ENCODE measurements at regions of chr12 and their contacts with region 1.

Region 1: GRCh38 chr12:29505122-29505521 is 7.6 kb upstream of the OVCH1 start:
- DNase-seq: no peak
- H3K4me3 ChIP-seq: no peak overlapping the region
- H3K27ac ChIP-seq: no peak overlapping the region
- H3K4me1 ChIP-seq: no peaks in the 10 kb centered on the region
- H3K27me3 ChIP-seq: no peaks in the 10 kb centered on the region
- CTCF ChIP-seq: no peak

Region 2: DNA sequence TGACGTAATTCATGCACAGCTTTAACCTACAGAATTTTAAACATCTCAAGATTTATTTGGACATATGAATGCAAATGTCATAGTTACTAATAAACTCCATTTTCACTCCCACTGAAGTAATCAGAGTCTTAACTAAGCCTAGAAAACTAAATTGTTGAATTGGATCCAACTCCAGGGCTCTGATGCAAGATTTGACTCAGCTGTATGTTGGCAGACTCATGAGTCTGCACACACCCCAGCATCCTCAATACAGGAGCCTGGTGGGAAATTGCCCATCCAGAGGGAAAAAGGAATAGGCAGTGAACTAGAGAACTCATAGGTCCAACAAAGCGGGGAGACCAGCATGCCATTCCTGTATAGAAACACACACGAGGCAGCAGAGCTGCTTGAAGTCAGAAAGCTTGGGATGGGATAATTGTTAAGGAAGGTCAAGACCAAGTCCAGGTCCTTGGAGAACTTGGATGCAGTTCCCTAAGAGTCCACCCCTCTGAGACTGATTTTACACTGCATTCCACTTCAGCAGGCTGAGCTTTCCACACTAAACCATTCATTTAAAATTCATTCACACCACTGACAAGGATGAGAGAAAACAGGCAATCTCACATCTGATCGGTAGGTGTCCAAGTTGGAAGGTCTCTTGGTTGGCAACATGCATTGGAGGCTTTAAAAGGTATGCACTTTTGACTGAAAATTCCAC is 264.2 kb after region 1 on chr12:
- intact Hi-C with region 1: no loop called
- DNase-seq: peak in 1 of 2 donors; percentile 70
- H3K4me3 ChIP-seq: no peak overlapping the region
- H3K27ac ChIP-seq: no peak overlapping the region
- H3K4me1 ChIP-seq: peaks cover 0 to 15% of the 10 kb centered on the region in 2 donors
- H3K27me3 ChIP-seq: no peaks in the 10 kb centered on the region
- CTCF ChIP-seq: no peak

Region 3: GRCh38 chr12:30286345-30286926 is 781.3 kb after region 1 on chr12:
- intact Hi-C with region 1: loop called (anchors 10 kb)
- DNase-seq: no peak
- H3K4me3 ChIP-seq: no peak overlapping the region
- H3K27ac ChIP-seq: no peak overlapping the region
- H3K4me1 ChIP-seq: no peaks in the 10 kb centered on the region
- H3K27me3 ChIP-seq: no peaks in the 10 kb centered on the region
- CTCF ChIP-seq: peak in 2 of 3 experiments; percentile 33 to 50

Measured in ascending aorta (tissue), 2 donors.